ENCODE measurements at regions of chr9 and their contacts with region 1.

Region 1: GRCh38 chr9:28688172-28688571 is 1114.9 kb upstream of the C9orf72 start:
- DNase-seq: no peak
- ATAC-seq: no peak
- H3K4me3 ChIP-seq: no peak overlapping the region
- H3K27ac ChIP-seq: no peak overlapping the region
- H3K4me1 ChIP-seq: no peaks in the 10 kb centered on the region
- H3K27me3 ChIP-seq: no peaks in the 10 kb centered on the region
- CTCF ChIP-seq: no peak

Region 2: DNA sequence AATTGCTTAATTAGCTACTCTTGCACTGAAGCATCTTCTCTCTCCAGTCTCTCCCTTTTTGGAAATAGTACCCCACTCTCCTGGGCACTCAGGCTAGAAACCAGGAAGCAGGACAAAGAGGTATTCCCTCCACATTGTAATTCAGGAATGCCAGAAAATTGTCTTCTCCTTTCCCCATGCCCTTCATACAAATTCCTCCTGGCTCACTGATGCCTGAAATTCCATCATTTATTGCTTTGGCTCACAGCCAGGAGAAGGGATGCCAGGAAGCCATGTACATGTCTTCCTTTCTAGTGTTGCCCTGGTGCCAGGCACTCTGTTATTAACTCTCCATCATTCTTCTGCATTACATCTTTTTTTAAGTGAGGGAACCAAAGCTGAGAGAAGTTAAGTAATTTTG is 398.4 kb before region 1 on chr9:
- intact Hi-C with region 1: loop called in 1 of 10 experiments (anchors 10 kb)
- DNase-seq: no peak
- ATAC-seq: no peak
- H3K4me3 ChIP-seq: no peak overlapping the region
- H3K27ac ChIP-seq: no peak overlapping the region
- H3K4me1 ChIP-seq: no peaks in the 10 kb centered on the region
- H3K27me3 ChIP-seq: no peaks in the 10 kb centered on the region
- CTCF ChIP-seq: no peak

Region 3: DNA sequence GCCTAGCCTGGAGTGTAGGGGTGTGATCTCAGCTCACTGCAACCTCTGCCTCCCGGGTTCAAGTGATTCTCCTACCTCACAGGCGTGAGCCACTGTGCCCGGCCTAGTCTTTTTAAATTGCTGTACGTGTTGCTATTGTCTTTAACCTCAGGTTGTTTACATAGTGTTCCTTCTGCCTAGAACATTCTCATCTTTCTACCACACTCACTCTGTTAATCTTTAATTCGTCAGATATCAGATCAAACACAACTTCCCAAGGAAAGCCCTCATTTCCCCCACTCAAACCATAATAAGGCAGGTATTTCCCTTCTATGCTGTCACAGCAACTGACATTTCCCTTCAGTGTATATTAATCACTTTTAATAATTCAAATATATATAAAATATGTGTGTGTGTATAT is 195.1 kb after region 1 on chr9:
- intact Hi-C with region 1: no loop called
- DNase-seq: no peak
- ATAC-seq: no peak
- H3K4me3 ChIP-seq: no peak overlapping the region
- H3K27ac ChIP-seq: no peak overlapping the region
- H3K4me1 ChIP-seq: no peaks in the 10 kb centered on the region
- H3K27me3 ChIP-seq: no peaks in the 10 kb centered on the region
- CTCF ChIP-seq: no peak

Region 4: DNA sequence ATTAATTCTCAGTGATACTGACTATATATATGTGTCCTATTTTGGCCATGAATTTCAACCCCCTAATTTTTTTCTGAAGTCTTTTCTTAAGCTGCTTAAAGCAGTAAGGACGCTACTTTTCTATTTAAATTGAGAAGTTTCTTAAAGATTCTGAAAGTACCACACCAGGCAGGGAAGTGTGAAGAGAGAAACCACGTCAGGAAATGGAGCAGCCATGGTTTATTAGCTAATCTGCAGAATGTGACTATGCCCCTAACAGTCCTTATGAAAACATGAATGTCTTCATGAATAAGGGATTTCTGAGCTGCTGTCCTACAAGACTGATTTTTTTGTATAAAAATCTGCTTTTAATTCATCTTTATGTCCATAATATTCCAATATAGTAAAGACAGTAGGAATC is 609.4 kb after region 1 on chr9:
- intact Hi-C with region 1: no loop called
- DNase-seq: no peak
- ATAC-seq: no peak
- H3K4me3 ChIP-seq: no peak overlapping the region
- H3K27ac ChIP-seq: no peak overlapping the region
- H3K4me1 ChIP-seq: no peaks in the 10 kb centered on the region
- H3K27me3 ChIP-seq: no peaks in the 10 kb centered on the region
- CTCF ChIP-seq: no peak

Region 5: DNA sequence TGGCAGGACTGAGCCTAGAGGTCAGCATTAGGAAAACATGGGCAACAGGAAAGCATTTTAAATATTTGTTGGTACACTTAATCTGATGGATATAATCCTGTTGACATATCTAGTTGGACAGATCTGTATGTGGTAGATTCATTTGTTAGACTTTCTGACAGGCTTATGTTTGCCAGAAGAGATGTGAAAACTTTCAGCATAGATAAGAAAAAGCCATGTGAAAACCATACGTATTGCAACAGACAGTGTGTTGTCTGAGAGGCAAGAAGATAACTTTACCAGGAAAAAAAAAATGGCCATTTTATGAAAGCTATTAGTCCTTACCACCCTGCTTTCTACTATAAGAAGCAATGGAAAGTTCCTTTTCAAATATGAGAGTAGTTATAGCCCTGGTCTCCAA is 787.3 kb after region 1 on chr9:
- intact Hi-C with region 1: loop called in 1 of 10 experiments (anchors 10 kb)
- DNase-seq: no peak
- ATAC-seq: no peak
- H3K4me3 ChIP-seq: no peak overlapping the region
- H3K27ac ChIP-seq: no peak overlapping the region
- H3K4me1 ChIP-seq: no peaks in the 10 kb centered on the region
- H3K27me3 ChIP-seq: no peaks in the 10 kb centered on the region
- CTCF ChIP-seq: no peak